H1 (cell line): ENCODE measurements at regions of chr20 and their contacts with region 1.

Region 1: DNA sequence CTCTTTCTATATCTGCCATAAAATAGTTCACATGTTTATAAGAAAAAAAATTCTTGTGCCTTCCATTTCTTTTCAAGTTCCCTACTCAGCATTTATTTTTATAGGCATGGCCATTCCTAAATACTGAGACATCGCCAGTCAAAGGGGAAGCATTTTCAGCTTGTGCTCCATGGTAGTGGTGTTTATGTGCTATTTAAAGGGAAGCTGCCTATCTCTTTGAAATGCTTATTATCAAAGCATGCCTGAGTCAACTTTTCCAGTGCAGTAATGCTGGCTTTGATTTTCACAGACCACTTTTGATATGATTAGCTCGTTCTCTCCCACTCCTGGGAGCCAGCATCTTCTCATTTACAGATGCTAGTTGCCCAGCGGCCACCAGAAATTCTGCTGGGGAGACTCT is 124.1 kb upstream of the RIN2 start:
- DNase-seq: no peak
- H3K4me3 ChIP-seq: no peak overlapping the region
- H3K27ac ChIP-seq: no peak overlapping the region
- H3K4me1 ChIP-seq: peaks cover 0 to 3% (median 0%) of the 10 kb centered on the region in 4 experiments; a peak in 1 of 7 replicates
- H3K27me3 ChIP-seq: no peaks in the 10 kb centered on the region
- CTCF ChIP-seq: no peak
- EP300 ChIP-seq: no peak
- POLR2A ChIP-seq: no peak
- RAD21 ChIP-seq: no peak

Region 2: GRCh38 chr20:19621072-19621471 is 12.9 kb before region 1 on chr20:
- CTCF ChIA-PET with region 1: interaction called, 12 read pairs
- POLR2A ChIA-PET with region 1: no interaction called
- DNase-seq: no peak
- H3K4me3 ChIP-seq: peak overlapping the region in 1 of 4 experiments; percentile 19; a peak in 1 of 8 replicates
- H3K27ac ChIP-seq: no peak overlapping the region
- H3K4me1 ChIP-seq: peaks cover 0 to 24% (median 8%) of the 10 kb centered on the region in 4 experiments; a peak in 3 of 7 replicates
- H3K27me3 ChIP-seq: no peaks in the 10 kb centered on the region
- CTCF ChIP-seq: no peak
- EP300 ChIP-seq: no peak
- POLR2A ChIP-seq: no peak
- RAD21 ChIP-seq: no peak

Region 3: DNA sequence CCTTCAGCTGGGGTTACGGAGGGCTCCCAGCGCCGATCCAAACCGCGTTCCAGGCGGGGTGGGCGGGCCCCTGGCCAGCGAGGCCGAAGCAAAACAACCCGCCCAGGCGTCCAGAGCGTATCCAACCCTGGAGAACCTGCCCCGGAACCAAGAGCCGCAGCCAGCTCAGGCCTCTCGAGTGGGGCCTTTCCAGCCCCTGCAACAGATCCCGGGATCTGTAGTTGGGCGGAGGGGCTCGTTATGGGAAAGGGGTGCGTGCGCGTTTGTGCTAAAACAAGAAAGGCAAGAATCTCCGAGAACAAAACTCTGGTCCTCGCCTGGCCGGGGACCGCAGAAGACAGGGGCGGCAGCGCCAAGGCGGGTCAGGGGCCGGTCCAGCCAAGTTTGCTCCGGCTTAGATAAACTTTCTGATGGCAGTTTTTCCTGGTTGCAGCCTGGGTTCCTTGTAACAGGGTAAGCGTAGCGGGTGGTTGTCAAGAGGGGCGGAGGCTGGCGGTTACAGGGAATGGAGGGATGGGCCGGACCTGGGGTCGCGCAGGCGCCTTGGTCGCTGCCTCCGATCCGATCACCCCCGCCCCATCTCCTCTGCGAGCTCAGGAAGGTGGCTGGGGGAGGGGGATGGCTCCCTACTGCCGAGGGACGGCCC is 123.6 kb after region 1 on chr20:
- CTCF ChIA-PET with region 1: no interaction called
- POLR2A ChIA-PET with region 1: no interaction called
- DNase-seq: peak; percentile 88 to 90
- H3K4me3 ChIP-seq: peak overlapping the region; percentile 78 to 89 (median 82)
- H3K27ac ChIP-seq: no peak overlapping the region
- H3K4me1 ChIP-seq: peaks cover 0 to 4% (median 0%) of the 10 kb centered on the region in 4 experiments; a peak in 2 of 7 replicates
- H3K27me3 ChIP-seq: peaks cover 0 to 16% (median 10%) of the 10 kb centered on the region in 4 experiments; a peak in 4 of 7 replicates
- CTCF ChIP-seq: no peak
- EP300 ChIP-seq: no peak
- POLR2A ChIP-seq: 0 out of 3 replicates have a peak, but pooled peaks of 1 of the 2 experiments have one; percentile 23
- RAD21 ChIP-seq: no peak